CD14-positive monocyte (primary cell): ENCODE measurements at regions of chr4 and their contacts with region 1.

Region 1: GRCh38 chr4:81844717-81845116 is 373.0 kb upstream of the RASGEF1B start:
- DNase-seq: peak; percentile 75 to 84 (median 77)
- H3K4me3 ChIP-seq: no peak overlapping the region
- H3K4me3 Mint-ChIP-seq: no peak overlapping the region
- H3K27ac ChIP-seq: no peak overlapping the region
- H3K27ac Mint-ChIP-seq: no peak overlapping the region
- H3K4me1 ChIP-seq: no peaks in the 10 kb centered on the region
- H3K4me1 Mint-ChIP-seq: no peaks in the 10 kb centered on the region
- H3K27me3 ChIP-seq: no peaks in the 10 kb centered on the region
- H3K27me3 Mint-ChIP-seq: peaks cover 0 to 4% (median 2%) of the 10 kb centered on the region in 3 donors
- CTCF ChIP-seq: peak; percentile 73

Region 2: DNA sequence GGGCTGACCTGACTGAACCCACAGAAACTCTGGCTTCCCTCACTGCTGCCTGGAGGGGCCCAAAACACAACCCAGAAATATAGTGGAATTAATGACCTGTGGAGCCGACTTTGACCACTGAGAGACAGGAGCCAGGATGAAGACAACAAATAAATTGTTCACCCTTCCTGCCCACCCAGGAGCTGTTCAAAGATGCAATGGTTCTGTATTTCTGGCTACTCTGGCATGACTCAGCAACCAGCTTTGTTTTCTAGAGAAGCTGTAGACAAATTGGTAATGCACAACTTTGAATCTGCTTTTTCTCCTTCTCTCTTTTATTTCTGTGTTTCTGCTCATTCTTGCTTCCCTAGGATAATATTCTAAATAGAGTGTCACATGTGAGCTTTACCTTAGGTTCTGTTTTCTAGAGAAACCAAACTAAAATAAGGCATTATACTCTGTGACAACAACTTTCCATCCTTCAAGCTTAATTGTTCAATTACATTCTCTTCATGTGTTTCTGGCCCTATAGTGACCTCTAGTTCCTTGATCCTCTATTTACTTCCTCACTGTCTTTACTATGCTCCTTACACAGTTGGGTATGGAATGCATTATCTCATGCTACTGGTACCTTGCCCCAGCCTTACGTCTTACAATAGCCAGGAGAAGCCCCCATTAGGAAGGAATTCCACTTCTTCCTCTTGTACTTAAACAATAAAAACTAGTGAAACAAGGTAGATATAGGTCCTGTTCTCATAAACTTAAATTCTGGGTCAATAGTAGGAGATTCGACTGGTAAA is 623.2 kb before region 1 on chr4:
- intact Hi-C with region 1: no loop called
- DNase-seq: no peak
- H3K4me3 ChIP-seq: no peak overlapping the region
- H3K4me3 Mint-ChIP-seq: no peak overlapping the region
- H3K27ac ChIP-seq: no peak overlapping the region
- H3K27ac Mint-ChIP-seq: no peak overlapping the region
- H3K4me1 ChIP-seq: no peaks in the 10 kb centered on the region
- H3K4me1 Mint-ChIP-seq: no peaks in the 10 kb centered on the region
- H3K27me3 ChIP-seq: peaks cover 7 to 11% of the 10 kb centered on the region in 2 donors
- H3K27me3 Mint-ChIP-seq: peaks cover 6 to 13% (median 6%) of the 10 kb centered on the region in 3 donors
- CTCF ChIP-seq: no peak

Region 3: DNA sequence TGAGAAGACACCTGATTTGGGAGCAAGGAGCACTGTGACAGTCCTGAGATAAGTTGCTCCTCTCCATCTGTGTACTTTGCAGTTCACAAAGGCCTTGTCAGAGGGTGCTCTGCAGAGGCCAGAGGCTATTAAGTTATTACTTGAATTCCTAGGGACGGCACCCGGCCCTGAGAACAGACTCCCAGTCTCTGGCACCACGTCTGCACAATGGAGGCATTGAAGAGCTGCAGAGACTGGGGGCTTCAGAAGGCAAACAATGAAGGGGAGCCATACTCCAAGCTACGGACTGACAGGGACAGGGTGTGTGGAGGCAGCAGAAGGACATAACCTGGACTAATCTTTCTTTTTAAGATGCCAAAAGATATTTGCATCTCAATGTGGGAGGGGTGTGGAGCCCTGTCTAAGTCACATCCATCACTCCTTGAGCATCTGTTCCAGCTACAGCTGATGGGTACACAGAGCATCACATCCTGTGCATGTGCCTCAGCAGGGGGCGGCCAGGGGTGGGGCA is 384.5 kb before region 1 on chr4:
- intact Hi-C with region 1: loop called (anchors 5 kb)
- DNase-seq: no peak
- H3K4me3 ChIP-seq: no peak overlapping the region
- H3K4me3 Mint-ChIP-seq: no peak overlapping the region
- H3K27ac ChIP-seq: no peak overlapping the region
- H3K27ac Mint-ChIP-seq: peak overlapping the region in 1 of 7 donors; percentile 23
- H3K4me1 ChIP-seq: peaks cover 3 to 5% of the 10 kb centered on the region in 2 donors
- H3K4me1 Mint-ChIP-seq: peaks cover 8% of the 10 kb centered on the region
- H3K27me3 ChIP-seq: no peaks in the 10 kb centered on the region
- H3K27me3 Mint-ChIP-seq: peaks cover 0 to 3% (median 0%) of the 10 kb centered on the region in 3 donors
- CTCF ChIP-seq: no peak